Prostate gland (tissue), 2 donors: ENCODE measurements at regions of chr5 and their contacts with region 1.

Region 1: DNA sequence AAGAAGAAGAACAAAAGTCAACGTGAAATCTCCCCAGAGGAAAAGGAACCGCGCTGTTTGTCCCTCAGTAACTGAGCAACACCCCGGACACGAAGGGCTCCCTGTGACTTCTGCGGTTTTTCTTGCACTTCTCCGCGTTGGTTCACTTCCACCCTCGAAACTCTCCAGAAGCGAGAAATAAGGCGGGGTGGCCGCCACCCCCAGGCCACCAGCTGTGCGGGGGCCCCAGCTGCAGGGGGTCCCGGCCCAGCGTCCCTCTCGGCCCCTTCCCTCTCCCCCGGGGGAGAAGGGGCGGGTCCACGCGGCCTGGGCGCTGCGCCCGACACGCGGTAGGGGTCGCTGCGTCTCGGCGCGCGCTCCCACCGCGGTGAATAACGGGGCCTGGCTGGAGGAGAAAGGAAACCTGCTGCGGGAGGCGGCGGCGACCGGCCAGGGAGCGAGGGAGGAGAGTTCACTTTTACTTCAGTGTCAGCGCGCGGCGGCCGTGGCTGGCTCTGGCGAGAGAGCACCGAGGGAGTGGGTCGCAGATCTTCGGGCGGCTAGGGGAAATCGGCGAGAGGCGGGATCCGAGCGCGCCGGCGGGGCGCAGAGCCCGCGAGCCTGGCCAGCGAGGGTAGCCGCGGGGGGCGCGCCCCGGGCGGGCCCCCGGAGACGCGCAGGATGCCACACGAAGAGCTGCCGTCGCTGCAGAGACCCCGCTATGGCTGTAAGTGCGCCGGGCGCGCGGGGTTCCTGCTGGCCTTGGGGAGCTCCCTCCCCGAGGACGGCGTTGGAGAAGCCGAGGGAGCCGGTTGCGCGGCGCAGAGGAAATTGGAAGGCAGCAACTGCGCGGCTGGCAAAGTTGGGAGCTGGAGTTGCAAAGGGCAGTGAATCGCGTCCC is at the start of gene IQGAP2:
- DNase-seq: peak; percentile 70
- H3K4me3 ChIP-seq: peak within 1 kb of the TSS; percentile 66 to 75
- H3K27ac ChIP-seq: peak within 1 kb of the TSS; percentile 86 to 90
- H3K4me1 ChIP-seq: no peaks in the 10 kb centered on the region
- H3K27me3 ChIP-seq: no peaks in the 10 kb centered on the region
- CTCF ChIP-seq: peak; percentile 57 to 89 (median 75)
- POLR2A ChIP-seq: peak; percentile 45
- total RNA-seq, gene IQGAP2: 41.5 to 64.9 TPM

Region 2: DNA sequence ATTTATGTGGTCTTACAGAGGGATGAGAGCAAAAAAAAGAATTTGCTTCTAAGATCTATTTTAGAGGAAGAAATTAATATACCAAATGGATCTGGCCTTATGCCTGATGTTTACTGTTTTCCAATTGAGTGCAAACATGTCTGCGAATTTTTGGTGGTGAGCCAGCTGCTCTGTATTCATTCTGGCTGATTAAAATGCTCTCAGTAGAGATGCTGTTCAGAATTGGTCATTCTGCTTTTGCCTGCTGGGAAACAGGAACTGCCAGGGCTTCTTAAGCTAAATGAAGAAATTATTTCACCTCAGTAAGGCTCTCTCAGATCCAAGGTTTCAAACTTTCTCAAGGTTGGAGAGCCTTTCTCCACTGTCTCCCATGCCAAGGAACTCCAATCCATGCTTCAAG is 452.0 kb before region 1 on chr5:
- intact Hi-C with region 1: no loop called
- DNase-seq: no peak
- H3K4me3 ChIP-seq: no peak overlapping the region
- H3K27ac ChIP-seq: no peak overlapping the region
- H3K4me1 ChIP-seq: no peaks in the 10 kb centered on the region
- H3K27me3 ChIP-seq: no peaks in the 10 kb centered on the region
- CTCF ChIP-seq: no peak
- POLR2A ChIP-seq: no peak

Region 3: DNA sequence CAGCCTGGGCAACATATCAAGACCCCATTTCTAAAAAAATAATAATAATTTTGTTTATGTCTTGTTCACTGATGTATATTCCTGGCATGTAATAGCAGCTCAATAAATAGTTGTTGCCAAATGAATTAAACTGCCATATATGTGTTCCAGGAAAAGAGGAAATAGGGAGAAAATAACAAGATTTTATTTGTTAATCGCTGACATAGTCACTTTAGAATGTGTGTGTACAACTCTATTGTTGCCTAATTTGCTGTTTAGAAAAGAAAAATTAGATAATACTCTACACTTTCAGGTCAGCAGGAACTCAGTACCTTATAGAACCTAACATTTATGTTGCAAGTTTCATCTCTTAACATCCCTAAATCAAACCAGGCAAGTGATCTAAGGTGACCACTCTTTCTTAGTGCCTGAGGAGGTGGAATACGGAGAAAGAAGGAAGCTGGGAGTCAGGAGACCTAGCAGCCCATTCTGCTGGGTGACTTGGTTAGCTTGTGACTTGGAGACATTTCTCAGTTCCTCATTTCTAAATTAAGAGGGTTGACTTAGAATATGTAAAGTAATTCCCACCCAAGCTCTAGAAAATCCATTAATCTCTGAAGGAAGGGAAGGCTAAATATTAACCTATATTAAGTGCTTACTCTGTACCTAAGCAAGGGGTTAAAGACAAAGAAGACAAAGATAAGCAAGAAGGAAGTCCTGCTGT is 110.4 kb before region 1 on chr5:
- intact Hi-C with region 1: no loop called
- DNase-seq: no peak
- H3K4me3 ChIP-seq: no peak overlapping the region
- H3K27ac ChIP-seq: peak overlapping the region; percentile 10 to 55
- H3K4me1 ChIP-seq: peaks cover 9% of the 10 kb centered on the region
- H3K27me3 ChIP-seq: no peaks in the 10 kb centered on the region
- CTCF ChIP-seq: no peak
- POLR2A ChIP-seq: no peak

Region 4: GRCh38 chr5:76489877-76490688 is 87.0 kb after region 1 on chr5:
- intact Hi-C with region 1: no loop called
- DNase-seq: no peak
- H3K4me3 ChIP-seq: no peak overlapping the region
- H3K27ac ChIP-seq: no peak overlapping the region
- H3K4me1 ChIP-seq: no peaks in the 10 kb centered on the region
- H3K27me3 ChIP-seq: no peaks in the 10 kb centered on the region
- CTCF ChIP-seq: no peak
- POLR2A ChIP-seq: no peak

Region 5: DNA sequence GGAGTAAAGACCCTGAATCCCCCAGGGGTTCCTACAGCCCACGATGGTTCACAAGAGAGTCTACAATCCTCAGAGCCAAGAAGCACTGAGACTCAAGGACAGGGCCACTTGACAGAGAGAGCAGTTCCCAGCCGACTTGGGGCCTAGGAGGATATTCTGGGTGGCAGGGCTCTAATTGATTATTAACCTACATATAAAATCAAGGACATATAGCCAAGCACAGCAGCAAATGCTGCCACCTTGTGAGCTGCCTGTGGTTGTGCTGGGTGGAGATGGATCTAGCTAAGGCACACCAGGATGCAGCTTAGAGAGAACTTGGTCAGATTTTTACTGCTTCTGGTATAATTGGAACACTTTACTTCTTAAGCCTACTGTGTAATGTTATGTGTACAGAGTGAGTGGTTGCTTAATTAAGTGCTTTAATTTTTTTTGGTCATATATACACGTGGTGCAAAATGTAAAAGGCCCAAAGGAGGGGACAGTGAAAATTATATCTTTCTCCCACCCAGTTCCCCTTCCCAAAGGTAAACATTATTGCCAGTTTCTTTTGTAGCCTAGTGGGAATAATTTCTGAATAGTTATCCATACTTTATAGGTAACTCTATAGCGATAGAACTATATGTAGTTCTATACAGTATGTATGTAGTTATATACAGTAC is 141.3 kb after region 1 on chr5:
- intact Hi-C with region 1: loop called (anchors 5 kb)
- DNase-seq: peak; percentile 53
- H3K4me3 ChIP-seq: no peak overlapping the region
- H3K27ac ChIP-seq: peak overlapping the region; percentile 15 to 33
- H3K4me1 ChIP-seq: peaks cover 18% of the 10 kb centered on the region
- H3K27me3 ChIP-seq: no peaks in the 10 kb centered on the region
- CTCF ChIP-seq: peak in 3 of 4 experiments; percentile 52 to 76 (median 70)
- POLR2A ChIP-seq: no peak

Region 6: GRCh38 chr5:76582230-76583162 is 179.4 kb after region 1 on chr5:
- intact Hi-C with region 1: loop called (anchors 5 kb)
- DNase-seq: no peak
- H3K4me3 ChIP-seq: no peak overlapping the region
- H3K27ac ChIP-seq: no peak overlapping the region
- H3K4me1 ChIP-seq: no peaks in the 10 kb centered on the region
- H3K27me3 ChIP-seq: no peaks in the 10 kb centered on the region
- CTCF ChIP-seq: no peak
- POLR2A ChIP-seq: no peak